Colonic mucosa (tissue), 4 donors: ENCODE measurements at regions of chr1 and their contacts with region 1.

Region 1: DNA sequence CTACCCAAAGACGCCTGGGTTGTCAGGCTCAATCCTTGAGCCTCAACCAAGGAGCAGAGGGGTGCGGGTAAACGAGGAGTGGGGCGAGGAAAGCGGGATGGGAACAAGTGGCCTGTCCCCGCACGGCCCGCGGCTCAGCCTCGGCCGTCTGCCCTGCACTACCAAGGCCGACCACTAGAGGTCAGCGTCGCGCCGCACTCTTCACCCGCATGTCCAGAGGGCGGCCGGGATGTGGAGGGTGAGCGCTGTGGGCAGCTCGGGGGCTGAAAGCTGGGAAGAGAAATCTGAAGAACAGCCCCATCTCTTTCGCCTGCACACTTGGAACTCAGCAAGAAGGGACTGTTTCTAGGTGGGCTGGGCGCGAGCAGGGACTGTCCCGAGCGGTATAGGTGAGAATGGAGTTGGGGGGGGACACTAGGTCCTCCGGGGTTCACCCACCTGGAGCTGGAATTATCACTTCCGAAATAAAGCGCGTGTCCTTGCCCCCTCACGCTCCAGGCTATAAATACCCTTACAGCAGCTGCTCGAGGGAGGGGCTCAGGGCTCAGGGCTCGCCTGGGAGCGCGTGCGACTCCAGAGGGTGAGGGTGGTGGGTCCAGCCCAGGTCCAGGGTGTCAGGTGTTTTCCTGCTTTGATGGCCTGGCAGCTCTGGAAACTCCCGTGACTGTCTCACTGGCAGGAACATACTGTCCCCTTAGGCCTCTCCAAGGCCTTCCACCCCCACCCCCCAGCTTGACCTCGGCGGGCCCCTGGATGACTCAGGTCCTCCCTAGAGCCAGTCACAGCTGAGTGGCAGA is 9.8 kb downstream of the SLC30A2 start:
- DNase-seq: peak; percentile 89
- H3K4me3 ChIP-seq: peak overlapping the region; percentile 77
- H3K27ac ChIP-seq: peak overlapping the region; percentile 45
- H3K4me1 ChIP-seq: peaks cover 3% of the 10 kb centered on the region
- H3K27me3 ChIP-seq: no peaks in the 10 kb centered on the region
- CTCF ChIP-seq: peak; percentile 100

Region 2: DNA sequence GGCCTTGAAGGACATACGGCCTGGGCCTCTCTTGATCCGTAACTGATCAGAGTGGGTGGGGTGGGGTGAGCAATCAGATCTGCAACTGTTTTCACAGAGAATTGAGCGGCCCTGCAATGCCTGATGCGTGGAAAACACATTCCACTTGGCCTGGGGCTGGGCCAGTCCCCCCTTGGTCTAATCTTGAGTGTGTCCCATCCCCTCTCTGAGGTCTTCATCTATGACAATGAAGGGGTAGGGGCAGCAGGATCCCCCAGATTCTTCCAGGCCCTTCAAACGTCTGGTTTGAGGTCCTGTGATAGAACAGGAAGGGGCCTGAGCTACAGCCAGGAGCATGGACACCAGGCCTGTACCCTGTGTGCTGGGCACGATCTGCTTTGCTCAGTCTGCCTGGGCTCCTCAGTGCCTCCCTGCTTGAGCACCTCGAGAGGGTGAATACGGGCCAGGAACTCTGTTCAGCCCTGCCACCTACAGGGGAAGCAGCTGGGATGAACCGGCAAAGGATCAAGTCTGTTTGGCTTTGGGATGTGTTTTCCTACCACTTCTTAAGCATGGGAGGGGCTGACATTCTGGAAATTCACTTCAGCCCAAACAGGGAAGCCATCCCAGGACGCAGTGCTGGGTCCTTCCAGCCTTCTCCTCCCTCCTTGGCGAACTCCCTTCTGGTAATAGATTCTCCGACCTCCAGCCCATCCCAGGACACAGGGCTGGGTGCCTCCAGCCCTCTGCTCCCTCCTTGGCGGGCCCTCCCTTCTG is 292.2 kb before region 1 on chr1:
- intact Hi-C with region 1: no loop called
- DNase-seq: peak; percentile 65
- H3K4me3 ChIP-seq: no peak overlapping the region
- H3K27ac ChIP-seq: peak overlapping the region; percentile 46
- H3K4me1 ChIP-seq: no peaks in the 10 kb centered on the region
- H3K27me3 ChIP-seq: no peaks in the 10 kb centered on the region
- CTCF ChIP-seq: peak; percentile 27

Region 3: DNA sequence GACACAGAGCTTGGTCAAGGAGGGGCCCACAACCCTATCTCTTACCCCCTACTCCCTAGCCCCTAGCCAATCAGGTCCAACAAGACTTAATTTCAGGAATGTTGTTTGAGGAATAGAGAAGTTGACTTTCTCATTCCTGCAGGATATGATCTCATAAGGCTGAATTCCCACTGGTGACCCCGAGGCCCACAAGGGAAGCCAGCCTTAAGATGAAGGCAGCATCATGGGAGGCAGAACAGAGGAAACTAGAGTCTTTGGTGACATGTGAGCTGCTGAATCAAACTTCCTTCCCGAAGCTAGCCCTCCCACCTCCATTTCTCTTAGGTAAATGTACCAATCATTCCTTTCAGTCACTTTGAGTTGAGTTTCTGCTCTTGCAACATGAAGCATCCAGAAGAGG is 66.4 kb after region 1 on chr1:
- intact Hi-C with region 1: loop called (anchors 5 kb)
- DNase-seq: no peak
- H3K4me3 ChIP-seq: no peak overlapping the region
- H3K27ac ChIP-seq: no peak overlapping the region
- H3K4me1 ChIP-seq: no peaks in the 10 kb centered on the region
- H3K27me3 ChIP-seq: no peaks in the 10 kb centered on the region
- CTCF ChIP-seq: no peak

Region 4: DNA sequence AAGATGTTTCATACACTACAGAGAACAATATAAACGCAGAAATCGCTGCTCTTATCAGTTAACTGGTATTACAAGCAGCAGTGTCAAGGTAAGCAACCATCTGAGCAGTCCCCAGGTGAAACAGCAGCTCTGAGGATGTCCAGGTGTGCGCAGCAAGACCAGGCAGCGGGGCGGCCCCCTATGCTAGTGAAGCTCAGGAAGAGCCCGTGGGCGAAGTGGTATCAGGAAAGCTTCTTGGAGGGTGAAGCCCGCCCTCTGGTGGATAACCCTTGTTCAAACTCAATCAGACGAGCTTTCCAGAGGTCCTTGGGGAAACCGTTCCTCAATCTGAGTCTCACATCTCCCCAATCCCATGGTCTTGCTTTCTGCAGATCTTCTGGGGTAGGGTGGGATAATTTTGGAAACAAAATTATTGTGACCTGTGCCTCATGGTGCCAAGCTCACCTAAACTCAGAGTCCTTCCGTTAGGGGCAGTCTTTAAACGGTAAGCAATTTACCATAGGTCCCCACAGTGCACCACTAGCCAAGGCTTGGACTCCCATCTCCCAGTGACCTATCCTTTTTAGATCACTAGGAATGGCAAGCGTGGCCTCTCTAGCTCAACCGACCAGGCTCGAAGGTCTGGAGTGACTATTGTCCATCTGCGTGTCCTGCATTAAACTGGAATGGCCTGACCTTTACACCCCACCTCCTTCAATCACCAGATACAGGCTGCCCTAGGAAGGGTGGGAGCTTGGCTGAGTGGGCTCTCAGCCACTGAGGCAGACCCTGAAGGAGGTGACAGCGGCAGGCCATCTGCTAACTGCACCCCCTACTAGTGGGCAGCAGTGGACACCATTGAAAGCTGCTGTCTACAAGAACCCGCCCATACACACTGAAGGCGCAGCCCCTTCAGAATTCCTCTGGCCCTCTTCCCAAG is 109.1 kb after region 1 on chr1:
- intact Hi-C with region 1: loop called (anchors 5 kb)
- DNase-seq: peak; percentile 88
- H3K4me3 ChIP-seq: no peak overlapping the region
- H3K27ac ChIP-seq: no peak overlapping the region
- H3K4me1 ChIP-seq: no peaks in the 10 kb centered on the region
- H3K27me3 ChIP-seq: no peaks in the 10 kb centered on the region
- CTCF ChIP-seq: peak; percentile 64